HEK293 (cell line): ENCODE measurements at regions of chr16 and their contacts with region 1.

Region 1: GRCh38 chr16:72856797-72857196 is 191.1 kb downstream of the ZFHX3 start:
- H3K4me3 ChIP-seq: no peak overlapping the region
- H3K27ac ChIP-seq: no peak overlapping the region
- H3K4me1 ChIP-seq: no peaks in the 10 kb centered on the region
- CTCF ChIP-seq: peak; percentile 45; the same call in 1 of the 2 replicates

Region 2: GRCh38 chr16:72895951-72896350 is 39.2 kb after region 1 on chr16:
- CTCF ChIA-PET with region 1: no interaction called
- POLR2A ChIA-PET with region 1: no interaction called
- H3K4me3 ChIP-seq: no peak overlapping the region
- H3K27ac ChIP-seq: no peak overlapping the region
- H3K4me1 ChIP-seq: no peaks in the 10 kb centered on the region
- CTCF ChIP-seq: no peak

Region 3: DNA sequence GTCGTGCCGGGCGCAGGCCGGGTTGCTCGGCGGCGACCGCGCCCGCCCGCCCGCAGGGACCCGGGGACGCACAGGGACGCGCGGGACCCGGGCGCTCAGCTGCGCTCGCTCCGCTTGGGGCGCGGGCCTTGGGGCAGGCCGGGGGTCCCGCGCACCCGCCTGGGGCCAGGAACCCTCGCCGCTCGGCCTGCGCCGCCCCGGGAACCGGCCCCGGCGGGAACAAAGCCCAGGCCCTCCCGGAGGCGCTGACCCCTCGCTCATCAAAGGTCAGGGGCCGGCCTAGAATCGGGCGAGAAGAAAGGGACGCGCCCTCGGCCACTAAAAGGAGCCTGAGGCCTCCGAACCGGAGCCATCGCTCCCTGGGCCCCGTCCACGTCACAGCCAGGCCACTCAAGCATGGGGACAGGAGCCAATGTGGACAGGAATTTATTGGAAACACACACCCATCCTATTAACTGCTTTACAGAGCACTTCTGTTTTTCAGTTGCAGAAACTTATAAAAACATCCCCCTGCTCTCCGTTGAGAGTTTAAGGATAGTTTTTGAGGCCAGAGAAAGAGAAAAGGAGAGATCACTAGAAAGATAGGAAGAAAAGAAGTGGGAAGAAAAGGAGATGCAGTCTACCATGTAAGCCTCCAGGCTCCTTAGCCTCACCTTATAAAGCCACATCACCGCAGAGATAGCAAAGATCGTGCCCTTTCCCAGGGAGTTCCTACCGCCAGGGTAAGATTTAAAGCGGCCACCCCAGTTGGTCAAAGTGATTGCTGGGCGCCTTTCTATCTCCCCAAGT is 191.7 kb after region 1 on chr16:
- CTCF ChIA-PET with region 1: interaction called, 10 read pairs
- POLR2A ChIA-PET with region 1: interaction called, 3 read pairs
- H3K4me3 ChIP-seq: peak overlapping the region; percentile 76
- H3K27ac ChIP-seq: peak overlapping the region; percentile 92
- H3K4me1 ChIP-seq: peaks cover 51% of the 10 kb centered on the region
- CTCF ChIP-seq: no peak

Region 4: DNA sequence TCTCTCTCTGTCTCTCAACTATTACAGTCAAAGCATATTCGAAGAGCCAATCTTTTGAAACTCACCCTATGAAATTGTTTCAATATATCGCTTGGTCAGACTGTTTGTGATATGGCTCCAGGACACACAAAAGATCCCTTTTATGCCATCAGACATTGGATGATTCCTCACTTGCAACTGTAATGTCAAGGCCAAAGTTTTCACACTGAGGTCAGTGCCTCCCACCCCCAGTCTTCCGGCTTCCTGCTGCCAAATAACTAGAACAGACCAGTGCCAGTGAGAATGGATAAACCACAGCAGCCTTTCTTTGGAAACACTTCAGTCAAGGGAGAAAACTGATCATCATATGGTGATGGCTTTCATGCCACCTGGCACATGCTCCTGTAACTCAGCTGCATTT is 513.1 kb after region 1 on chr16:
- CTCF ChIA-PET with region 1: no interaction called
- POLR2A ChIA-PET with region 1: no interaction called
- H3K4me3 ChIP-seq: no peak overlapping the region
- H3K27ac ChIP-seq: no peak overlapping the region
- H3K4me1 ChIP-seq: no peaks in the 10 kb centered on the region; the same call in 1 of the 2 replicates
- CTCF ChIP-seq: no peak